Activated CD4-positive, alpha-beta T cell treated with anti-CD3 and anti-CD28 coated beads for 36 hours (primary cell): ENCODE measurements at regions of chr2 and their contacts with region 1.

Region 1: GRCh38 chr2:181275643-181276070 is 181.5 kb upstream of the ITGA4 start:
- DNase-seq: peak; percentile 26
- ATAC-seq: peak; percentile 88
- H3K4me3 Mint-ChIP-seq: no peak overlapping the region
- H3K27ac Mint-ChIP-seq: peak overlapping the region; percentile 47
- H3K4me1 Mint-ChIP-seq: peaks cover 31% of the 10 kb centered on the region
- H3K27me3 Mint-ChIP-seq: no peaks in the 10 kb centered on the region

Region 2: GRCh38 chr2:181241797-181242196 is 33.9 kb before region 1 on chr2:
- CTCF ChIA-PET with region 1: no interaction called
- POLR2A ChIA-PET with region 1: no interaction called
- intact Hi-C with region 1: loop called in 1 of 2 experiments (anchors 5 kb)
- DNase-seq: peak; percentile 21
- ATAC-seq: peak; percentile 72
- H3K4me3 Mint-ChIP-seq: no peak overlapping the region
- H3K27ac Mint-ChIP-seq: no peak overlapping the region
- H3K4me1 Mint-ChIP-seq: peaks cover 30% of the 10 kb centered on the region
- H3K27me3 Mint-ChIP-seq: no peaks in the 10 kb centered on the region

Region 3: GRCh38 chr2:181258720-181259119 is 16.9 kb before region 1 on chr2:
- CTCF ChIA-PET with region 1: interaction called, 4 read pairs
- POLR2A ChIA-PET with region 1: no interaction called
- intact Hi-C with region 1: loop called in 1 of 2 experiments (anchors 2 kb)
- DNase-seq: no peak
- ATAC-seq: peak; percentile 16
- H3K4me3 Mint-ChIP-seq: no peak overlapping the region
- H3K27ac Mint-ChIP-seq: no peak overlapping the region
- H3K4me1 Mint-ChIP-seq: peaks cover 14% of the 10 kb centered on the region
- H3K27me3 Mint-ChIP-seq: no peaks in the 10 kb centered on the region